ENCODE measurements at regions of chr17 and their contacts with region 1.

Region 1: GRCh38 chr17:27601069-27601975 is 29.7 kb upstream of the LGALS9 start:
- DNase-seq: peak; percentile 84
- H3K4me3 Mint-ChIP-seq: no peak overlapping the region
- H3K27ac Mint-ChIP-seq: no peak overlapping the region
- H3K4me1 Mint-ChIP-seq: peaks cover 15% of the 10 kb centered on the region
- H3K27me3 Mint-ChIP-seq: no peaks in the 10 kb centered on the region

Region 2: DNA sequence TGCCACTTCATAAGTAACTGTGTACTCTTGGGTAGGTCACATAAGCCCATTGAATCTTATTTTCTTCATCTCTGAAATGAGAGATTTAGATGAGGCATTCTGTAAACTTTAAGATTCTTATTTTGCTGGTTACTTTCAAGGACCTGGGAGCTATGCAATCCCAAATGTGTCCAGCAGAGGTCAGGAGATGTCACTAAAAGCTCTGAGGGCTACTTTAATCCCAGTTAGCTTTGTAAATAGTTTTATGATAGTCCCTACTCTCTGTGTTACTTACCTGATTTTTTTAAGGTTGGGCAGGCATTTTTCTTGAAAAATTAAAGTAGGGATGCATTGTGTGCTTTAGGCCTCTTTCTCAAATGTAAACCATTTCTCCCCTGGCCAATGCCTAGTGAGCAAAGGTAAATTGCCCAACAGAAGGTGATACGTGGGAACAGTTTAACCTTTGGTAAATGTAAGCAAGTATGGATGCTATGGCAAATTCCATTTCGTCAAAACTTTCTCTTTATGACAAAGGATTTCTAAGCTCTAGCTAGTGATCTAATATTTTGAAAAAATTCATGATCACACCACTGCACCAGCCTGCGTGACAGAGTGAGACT is 364.5 kb before region 1 on chr17:
- CTCF ChIA-PET with region 1: interaction called, 22 read pairs
- POLR2A ChIA-PET with region 1: no interaction called
- DNase-seq: peak; percentile 77
- H3K4me3 Mint-ChIP-seq: no peak overlapping the region
- H3K27ac Mint-ChIP-seq: no peak overlapping the region
- H3K4me1 Mint-ChIP-seq: peaks cover 19% of the 10 kb centered on the region
- H3K27me3 Mint-ChIP-seq: peaks cover 4% of the 10 kb centered on the region

Region 3: GRCh38 chr17:27381007-27381501 is 220.3 kb before region 1 on chr17:
- CTCF ChIA-PET with region 1: interaction called, 31 read pairs
- POLR2A ChIA-PET with region 1: no interaction called
- DNase-seq: peak; percentile 75
- H3K4me3 Mint-ChIP-seq: no peak overlapping the region
- H3K27ac Mint-ChIP-seq: no peak overlapping the region
- H3K4me1 Mint-ChIP-seq: peaks cover 2% of the 10 kb centered on the region
- H3K27me3 Mint-ChIP-seq: peaks cover 24% of the 10 kb centered on the region

Region 4: DNA sequence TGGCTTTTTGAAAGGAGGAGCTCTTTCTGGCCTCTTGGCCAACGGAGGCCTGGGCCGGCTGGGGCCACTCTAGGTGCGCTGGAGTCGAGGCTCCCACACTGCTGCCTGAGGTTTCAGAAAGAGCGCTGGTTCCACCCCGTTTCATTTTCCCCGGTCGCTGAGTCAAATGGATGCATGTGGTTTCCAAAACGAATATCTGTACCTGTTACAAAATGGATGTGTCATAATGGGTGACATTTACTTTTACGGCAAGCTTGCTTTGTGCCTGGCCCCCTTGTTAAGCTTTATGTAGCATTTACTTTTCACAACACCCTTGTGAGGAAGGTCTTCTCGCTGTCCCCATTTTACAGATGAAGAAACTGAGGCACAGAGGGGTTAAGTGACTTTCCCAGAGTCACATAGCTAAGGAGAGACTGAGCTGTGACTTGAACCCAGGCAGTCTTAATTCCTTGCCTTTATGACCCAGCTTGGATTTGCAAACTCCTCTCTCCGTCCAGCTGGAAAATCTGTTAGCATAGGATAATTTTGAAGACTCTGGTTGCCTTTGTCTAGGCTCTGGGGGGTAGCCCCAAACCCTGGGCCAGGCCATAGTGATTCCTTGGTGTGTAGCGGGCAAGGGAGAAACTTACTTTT is 134.5 kb before region 1 on chr17:
- CTCF ChIA-PET with region 1: interaction called, 12 read pairs
- POLR2A ChIA-PET with region 1: no interaction called
- DNase-seq: peak; percentile 81
- H3K4me3 Mint-ChIP-seq: peak overlapping the region; percentile 67
- H3K27ac Mint-ChIP-seq: peak overlapping the region; percentile 97
- H3K4me1 Mint-ChIP-seq: peaks cover 89% of the 10 kb centered on the region
- H3K27me3 Mint-ChIP-seq: no peaks in the 10 kb centered on the region

Region 5: GRCh38 chr17:27546624-27547300 is 54.6 kb before region 1 on chr17:
- CTCF ChIA-PET with region 1: no interaction called
- POLR2A ChIA-PET with region 1: no interaction called
- DNase-seq: no peak
- H3K4me3 Mint-ChIP-seq: peak overlapping the region; percentile 27
- H3K27ac Mint-ChIP-seq: peak overlapping the region; percentile 68
- H3K4me1 Mint-ChIP-seq: peaks cover 66% of the 10 kb centered on the region
- H3K27me3 Mint-ChIP-seq: no peaks in the 10 kb centered on the region

Region 6: DNA sequence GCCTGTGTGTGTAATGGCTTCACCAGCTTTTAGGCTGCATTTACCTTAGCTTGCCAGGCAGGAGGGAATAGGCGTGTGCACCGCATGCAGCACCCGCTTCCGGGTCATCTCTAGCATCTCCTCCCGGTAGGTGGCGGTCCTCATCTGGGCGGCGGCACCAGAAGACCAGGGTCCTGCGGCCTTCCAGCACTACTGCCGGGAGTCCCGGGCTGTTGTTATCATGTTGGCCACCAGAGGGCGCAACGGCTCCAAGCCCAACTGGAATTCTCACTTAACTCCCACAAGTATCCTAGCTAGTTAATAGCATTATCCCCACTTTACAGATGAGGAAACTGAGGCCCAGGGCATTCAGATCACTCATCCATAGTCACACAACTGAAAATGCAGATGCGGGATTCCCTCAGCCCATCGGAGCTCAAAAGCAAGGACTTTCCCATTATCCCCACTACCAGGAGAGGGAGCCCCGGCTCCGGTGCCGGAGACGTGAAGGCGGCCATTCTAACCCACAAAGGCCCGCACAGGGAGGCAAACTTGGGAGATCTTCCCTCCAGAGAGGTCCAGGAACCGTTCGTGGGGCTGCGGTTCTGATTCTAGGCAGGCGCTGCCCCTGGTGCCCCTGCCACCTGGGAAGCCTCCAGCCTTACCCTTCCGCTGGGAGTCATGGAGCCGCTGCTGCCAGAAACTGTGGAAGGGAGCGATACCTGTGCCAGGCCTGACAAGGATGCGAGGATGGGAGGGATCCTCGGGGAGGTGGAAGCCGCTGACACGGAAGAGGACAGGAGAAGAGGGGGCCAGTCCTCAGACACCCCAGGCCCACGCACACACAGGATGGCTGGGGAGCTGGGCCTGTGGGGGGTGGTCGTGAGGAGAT is 53.6 kb after region 1 on chr17:
- CTCF ChIA-PET with region 1: interaction called, 10 read pairs
- POLR2A ChIA-PET with region 1: no interaction called
- DNase-seq: peak; percentile 68
- H3K4me3 Mint-ChIP-seq: no peak overlapping the region
- H3K27ac Mint-ChIP-seq: peak overlapping the region; percentile 33
- H3K4me1 Mint-ChIP-seq: peaks cover 9% of the 10 kb centered on the region
- H3K27me3 Mint-ChIP-seq: no peaks in the 10 kb centered on the region

Region 7: DNA sequence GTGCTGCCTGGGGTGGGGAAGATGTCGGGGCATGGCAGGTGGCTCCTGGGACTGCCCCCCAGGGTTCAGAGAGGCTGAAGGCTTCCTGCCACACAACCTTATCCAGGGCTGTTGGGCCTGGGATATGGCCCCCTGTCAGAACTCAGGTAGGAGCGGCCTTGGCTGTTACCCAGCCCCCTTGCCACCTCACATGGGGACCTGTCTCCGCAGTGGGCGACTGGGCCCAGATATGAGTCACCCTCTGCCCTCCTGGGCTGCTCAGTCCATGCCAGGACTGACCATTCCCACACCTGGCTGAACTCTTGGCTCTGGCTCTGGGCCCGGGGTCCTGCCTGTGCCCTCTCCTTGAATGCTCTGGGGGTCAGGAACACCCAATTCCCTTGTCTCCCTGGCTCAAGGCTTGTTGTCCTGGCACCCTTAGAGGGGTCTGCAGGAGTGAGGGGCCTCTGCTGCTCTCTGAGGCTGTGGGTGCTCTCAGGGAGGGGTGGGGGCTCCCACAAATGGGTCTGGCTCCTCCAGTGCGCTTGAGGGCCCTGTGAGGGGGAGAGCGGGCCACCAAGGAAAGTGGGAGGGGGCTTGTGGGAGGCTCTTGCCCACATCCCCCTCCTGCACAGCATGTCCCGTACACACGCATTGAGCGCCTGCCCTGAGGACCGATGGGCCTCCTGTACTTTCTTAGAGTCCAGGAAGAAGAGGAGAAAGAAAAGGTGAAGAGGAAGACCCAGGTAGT is 65.7 kb after region 1 on chr17:
- CTCF ChIA-PET with region 1: no interaction called
- POLR2A ChIA-PET with region 1: no interaction called
- DNase-seq: no peak
- H3K4me3 Mint-ChIP-seq: no peak overlapping the region
- H3K27ac Mint-ChIP-seq: no peak overlapping the region
- H3K4me1 Mint-ChIP-seq: no peaks in the 10 kb centered on the region
- H3K27me3 Mint-ChIP-seq: no peaks in the 10 kb centered on the region

Measured in activated CD4-positive, alpha-beta T cell treated with anti-CD3 and anti-CD28 coated beads, Interleukin-2, amount 10 ng/mL, durations not matched to agents 7 days and 5 days (primary cell).